CD8-positive, alpha-beta memory T cell (primary cell): ENCODE measurements at regions of chr10 and their contacts with region 1.

Region 1: GRCh38 chr10:89391917-89392756 is at the start of gene IFIT1:
- DNase-seq: peak; percentile 10 to 76 (median 72)
- H3K4me3 ChIP-seq: peak within 1 kb of the TSS; percentile 89
- H3K4me3 Mint-ChIP-seq: peak within 1 kb of the TSS; percentile 83 to 95 (median 94)
- H3K27ac ChIP-seq: peak within 1 kb of the TSS; percentile 68
- H3K27ac Mint-ChIP-seq: peak within 1 kb of the TSS; percentile 81 to 97 (median 92)
- H3K4me1 ChIP-seq: peaks cover 26% of the 10 kb centered on the region
- H3K4me1 Mint-ChIP-seq: peaks cover 23 to 43% (median 35%) of the 10 kb centered on the region in 3 donors
- H3K27me3 ChIP-seq: no peaks in the 10 kb centered on the region
- H3K27me3 Mint-ChIP-seq: peaks cover 0 to 1% of the 10 kb centered on the region in 2 donors
- total RNA-seq, gene IFIT1: 0.39 to 0.71 TPM

Region 2: DNA sequence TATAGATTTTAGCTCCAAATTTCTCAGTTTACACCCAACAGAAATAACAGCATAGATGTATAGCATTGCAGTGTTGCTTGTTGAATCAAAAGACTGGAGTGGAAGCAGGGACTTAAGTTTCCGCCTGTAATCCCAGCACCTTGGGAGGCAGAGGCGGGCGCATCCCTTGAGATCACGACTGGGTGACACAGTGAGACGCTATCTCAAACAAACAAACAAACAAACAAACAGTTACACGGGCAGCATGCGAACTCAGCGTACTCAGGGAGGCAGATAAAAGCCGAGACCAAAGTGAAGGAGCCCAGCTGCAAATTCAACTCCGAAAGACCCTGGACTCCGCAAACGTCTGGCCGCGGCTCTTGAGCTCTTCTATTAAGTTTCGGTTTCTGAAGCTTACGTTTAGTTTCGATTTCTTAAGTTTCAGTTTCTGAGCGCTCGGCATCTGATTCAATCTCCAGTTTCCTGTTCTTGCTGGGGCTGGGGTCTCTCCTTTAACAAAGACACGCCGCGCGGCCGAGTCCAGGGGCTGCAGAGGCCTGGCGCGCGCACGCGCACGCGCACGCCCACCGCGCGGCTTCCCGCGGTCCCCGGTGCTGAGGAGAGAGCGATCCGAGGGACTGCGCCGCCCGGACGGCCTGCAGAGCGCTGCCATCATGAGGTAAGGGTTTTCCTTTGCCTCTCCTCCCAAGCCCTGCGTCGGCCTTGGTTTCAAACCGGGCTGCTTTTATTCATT is 22.2 kb after region 1 on chr10 and contains the start of gene IFIT5:
- CTCF ChIA-PET with region 1: interaction called, 3 read pairs
- POLR2A ChIA-PET with region 1: interaction called, 30 read pairs
- DNase-seq: peak; percentile 52 to 82 (median 76)
- H3K4me3 ChIP-seq: peak within 1 kb of the TSS; percentile 88
- H3K4me3 Mint-ChIP-seq: peak within 1 kb of the TSS; percentile 92 to 97 (median 95)
- H3K27ac ChIP-seq: peak within 1 kb of the TSS; percentile 88
- H3K27ac Mint-ChIP-seq: peak within 1 kb of the TSS; percentile 89 to 100 (median 98)
- H3K4me1 ChIP-seq: peaks cover 39% of the 10 kb centered on the region
- H3K4me1 Mint-ChIP-seq: peaks cover 56 to 71% (median 70%) of the 10 kb centered on the region in 3 donors
- H3K27me3 ChIP-seq: no peaks in the 10 kb centered on the region
- H3K27me3 Mint-ChIP-seq: no peaks in the 10 kb centered on the region
- total RNA-seq, gene IFIT5: 6.2 to 6.5 TPM